Right cardiac atrium (tissue), 5 donors: ENCODE measurements at regions of chr5 and their contacts with region 1.

Region 1: DNA sequence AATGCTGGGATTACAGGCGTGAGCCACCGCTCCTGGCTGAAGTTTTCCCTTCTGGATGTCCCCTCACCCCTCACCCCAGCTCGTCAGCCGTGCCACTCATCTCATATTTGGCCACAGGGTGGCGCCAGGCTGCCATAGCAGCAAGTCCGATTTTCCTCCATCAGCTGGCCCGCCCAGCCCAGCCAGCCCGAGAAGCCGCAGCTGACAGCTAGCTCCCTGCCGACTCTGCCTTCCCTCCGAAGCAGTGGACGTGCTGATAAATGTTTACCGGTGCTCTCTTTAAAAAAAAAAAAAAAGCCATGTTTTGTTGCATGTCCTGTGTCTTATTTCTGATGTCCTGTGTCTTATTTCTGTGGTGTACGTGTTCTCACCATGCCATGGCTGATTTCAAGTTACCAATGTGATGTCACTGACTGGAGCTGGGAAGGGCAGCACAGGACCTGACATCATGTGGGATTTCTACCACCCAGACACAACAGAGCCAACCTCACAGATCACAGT is 58.3 kb downstream of the PFDN1 start:
- DNase-seq: peak; percentile 93 to 97 (median 96)
- ATAC-seq: peak; percentile 49 to 60
- H3K4me3 ChIP-seq: no peak overlapping the region
- H3K27ac ChIP-seq: peak overlapping the region; percentile 18
- H3K4me1 ChIP-seq: peaks cover 22% of the 10 kb centered on the region
- H3K27me3 ChIP-seq: no peaks in the 10 kb centered on the region

Region 2: GRCh38 chr5:140174465-140175366 is 69.9 kb before region 1 on chr5 and contains the start of gene CYSTM1:
- intact Hi-C with region 1: loop called in 1 of 4 experiments (anchors 5 kb)
- DNase-seq: peak; percentile 97 to 99 (median 98)
- ATAC-seq: peak; percentile 95 to 96
- H3K4me3 ChIP-seq: peak within 1 kb of the TSS; percentile 67
- H3K27ac ChIP-seq: peak within 1 kb of the TSS; percentile 86
- H3K4me1 ChIP-seq: peaks cover 5% of the 10 kb centered on the region
- H3K27me3 ChIP-seq: no peaks in the 10 kb centered on the region
- total RNA-seq, gene CYSTM1: 47.8 to 58.3 (median 51.1) TPM

Region 3: GRCh38 chr5:140351609-140352334 is 107.2 kb after region 1 on chr5:
- intact Hi-C with region 1: loop called (anchors 2 to 5 kb)
- DNase-seq: no peak
- ATAC-seq: peak; percentile 25 to 51
- H3K4me3 ChIP-seq: no peak overlapping the region
- H3K27ac ChIP-seq: no peak overlapping the region
- H3K4me1 ChIP-seq: peaks cover 3% of the 10 kb centered on the region
- H3K27me3 ChIP-seq: no peaks in the 10 kb centered on the region